OCI-LY7 (cell line): ENCODE measurements at regions of chr4 and their contacts with region 1.

Region 1: DNA sequence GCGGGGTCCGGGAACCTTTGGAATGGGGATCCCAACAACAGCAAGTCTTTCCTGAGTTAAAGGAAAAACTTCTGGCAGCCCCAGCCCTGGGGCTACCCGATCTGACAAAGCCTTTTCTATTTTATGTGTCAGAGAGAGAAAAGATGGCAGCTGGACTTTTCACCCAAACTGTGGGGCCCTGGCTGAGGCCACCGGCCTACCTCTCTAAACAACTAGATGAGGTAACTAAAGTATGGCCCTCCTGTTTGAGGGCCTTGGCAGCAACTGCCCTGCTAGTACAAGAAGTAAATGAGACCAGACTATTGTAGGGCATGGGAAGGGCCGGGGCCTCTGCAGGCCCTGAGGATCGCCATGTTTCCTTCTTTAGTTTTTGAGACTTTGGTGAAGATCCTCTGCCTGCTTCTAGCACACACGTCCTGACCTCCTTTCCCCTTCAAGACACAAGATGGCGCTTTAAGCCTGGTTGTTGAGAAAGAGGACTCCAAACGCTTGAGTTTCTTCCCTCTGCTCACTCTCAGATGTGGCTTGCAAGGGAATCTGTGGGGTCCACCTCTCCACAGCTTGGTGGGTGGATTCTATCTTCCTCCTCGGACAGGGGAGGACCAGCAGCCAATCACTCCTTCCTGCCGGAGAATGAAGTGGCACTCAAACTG is 18.5 kb upstream of the DRD5 start:
- DNase-seq: peak; percentile 58
- H3K4me3 ChIP-seq: no peak overlapping the region
- H3K27ac ChIP-seq: no peak overlapping the region
- H3K4me1 ChIP-seq: no peaks in the 10 kb centered on the region
- CTCF ChIP-seq: peak; percentile 73

Region 2: GRCh38 chr4:9816285-9816684 is 53.3 kb after region 1 on chr4:
- CTCF ChIA-PET with region 1: no interaction called
- POLR2A ChIA-PET with region 1: no interaction called
- intact Hi-C with region 1: no loop called
- DNase-seq: no peak
- H3K4me3 ChIP-seq: no peak overlapping the region
- H3K27ac ChIP-seq: no peak overlapping the region
- H3K4me1 ChIP-seq: no peaks in the 10 kb centered on the region
- CTCF ChIP-seq: no peak

Region 3: GRCh38 chr4:10063544-10064300 is 300.8 kb after region 1 on chr4:
- CTCF ChIA-PET with region 1: no interaction called
- POLR2A ChIA-PET with region 1: no interaction called
- intact Hi-C with region 1: loop called (anchors 2 kb)
- DNase-seq: no peak
- H3K4me3 ChIP-seq: no peak overlapping the region
- H3K27ac ChIP-seq: no peak overlapping the region
- H3K4me1 ChIP-seq: no peaks in the 10 kb centered on the region
- CTCF ChIP-seq: no peak